Heart right ventricle (tissue), 16 donors: ENCODE measurements at regions of chr2 and their contacts with region 1.

Region 1: GRCh38 chr2:16756831-16757644 is 91.4 kb upstream of the CYRIA start:
- DNase-seq: peak; percentile 80 to 81
- ATAC-seq: peak; percentile 78 to 94 (median 92)
- H3K4me3 ChIP-seq: no peak overlapping the region
- H3K27ac ChIP-seq: peak overlapping the region in 5 of 10 donors; percentile 39 to 61 (median 57)
- H3K4me1 ChIP-seq: peaks cover 0 to 28% (median 10%) of the 10 kb centered on the region in 9 donors
- H3K27me3 ChIP-seq: peaks cover 0 to 5% (median 0%) of the 10 kb centered on the region in 7 donors
- CTCF ChIP-seq: peak; percentile 89 to 96 (median 93)

Region 2: DNA sequence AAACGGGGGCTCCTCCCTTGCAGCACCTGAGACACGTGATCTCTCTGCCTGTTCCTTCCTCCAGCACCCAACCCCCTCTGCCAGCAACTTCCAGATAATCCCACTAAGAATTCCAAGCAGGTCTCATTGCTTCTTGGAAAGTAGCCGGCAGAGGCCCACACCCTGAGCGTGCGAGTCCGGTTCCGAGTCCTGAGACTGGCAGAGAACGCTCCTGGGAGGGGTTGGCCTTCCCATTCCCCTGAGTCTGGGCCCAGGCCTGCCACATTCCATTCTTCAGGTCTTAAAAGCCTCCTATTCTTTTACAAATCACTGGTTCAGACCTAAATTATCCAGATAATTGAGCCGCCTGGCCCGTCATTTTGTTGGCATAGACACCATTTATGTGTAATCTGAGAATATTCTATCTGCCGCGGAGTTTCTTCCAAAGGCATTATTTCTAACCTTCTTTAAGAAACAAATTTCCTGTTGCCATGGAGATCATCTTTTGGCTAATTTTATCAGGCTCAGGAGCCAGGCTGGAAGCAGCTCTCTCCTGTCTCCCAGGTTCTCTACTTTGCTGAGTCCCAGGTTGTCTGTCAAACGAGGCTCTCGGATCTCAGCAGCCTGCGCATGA is 651.3 kb before region 1 on chr2:
- intact Hi-C with region 1: no loop called
- DNase-seq: no peak
- ATAC-seq: no peak
- H3K4me3 ChIP-seq: no peak overlapping the region
- H3K27ac ChIP-seq: no peak overlapping the region
- H3K4me1 ChIP-seq: peaks cover 0 to 4% (median 0%) of the 10 kb centered on the region in 9 donors
- H3K27me3 ChIP-seq: peaks cover 0 to 73% (median 50%) of the 10 kb centered on the region in 7 donors
- CTCF ChIP-seq: no peak

Region 3: GRCh38 chr2:16546128-16546754 is 210.8 kb before region 1 on chr2:
- intact Hi-C with region 1: loop called in 5 of 10 experiments (anchors 5 to 10 kb)
- DNase-seq: peak in 1 of 2 donors; percentile 24
- ATAC-seq: peak in 2 of 8 donors; percentile 16 to 66
- H3K4me3 ChIP-seq: no peak overlapping the region
- H3K27ac ChIP-seq: no peak overlapping the region
- H3K4me1 ChIP-seq: no peaks in the 10 kb centered on the region
- H3K27me3 ChIP-seq: peaks cover 0 to 4% (median 0%) of the 10 kb centered on the region in 7 donors
- CTCF ChIP-seq: no peak

Region 4: GRCh38 chr2:16553226-16553625 is 203.8 kb before region 1 on chr2:
- intact Hi-C with region 1: loop called in 7 of 10 experiments (anchors 1 to 10 kb)
- DNase-seq: peak in 1 of 2 donors; percentile 16
- ATAC-seq: peak in 2 of 8 donors; percentile 12 to 22
- H3K4me3 ChIP-seq: no peak overlapping the region
- H3K27ac ChIP-seq: no peak overlapping the region
- H3K4me1 ChIP-seq: no peaks in the 10 kb centered on the region
- H3K27me3 ChIP-seq: no peaks in the 10 kb centered on the region
- CTCF ChIP-seq: peak; percentile 23 to 68 (median 61)

Region 5: DNA sequence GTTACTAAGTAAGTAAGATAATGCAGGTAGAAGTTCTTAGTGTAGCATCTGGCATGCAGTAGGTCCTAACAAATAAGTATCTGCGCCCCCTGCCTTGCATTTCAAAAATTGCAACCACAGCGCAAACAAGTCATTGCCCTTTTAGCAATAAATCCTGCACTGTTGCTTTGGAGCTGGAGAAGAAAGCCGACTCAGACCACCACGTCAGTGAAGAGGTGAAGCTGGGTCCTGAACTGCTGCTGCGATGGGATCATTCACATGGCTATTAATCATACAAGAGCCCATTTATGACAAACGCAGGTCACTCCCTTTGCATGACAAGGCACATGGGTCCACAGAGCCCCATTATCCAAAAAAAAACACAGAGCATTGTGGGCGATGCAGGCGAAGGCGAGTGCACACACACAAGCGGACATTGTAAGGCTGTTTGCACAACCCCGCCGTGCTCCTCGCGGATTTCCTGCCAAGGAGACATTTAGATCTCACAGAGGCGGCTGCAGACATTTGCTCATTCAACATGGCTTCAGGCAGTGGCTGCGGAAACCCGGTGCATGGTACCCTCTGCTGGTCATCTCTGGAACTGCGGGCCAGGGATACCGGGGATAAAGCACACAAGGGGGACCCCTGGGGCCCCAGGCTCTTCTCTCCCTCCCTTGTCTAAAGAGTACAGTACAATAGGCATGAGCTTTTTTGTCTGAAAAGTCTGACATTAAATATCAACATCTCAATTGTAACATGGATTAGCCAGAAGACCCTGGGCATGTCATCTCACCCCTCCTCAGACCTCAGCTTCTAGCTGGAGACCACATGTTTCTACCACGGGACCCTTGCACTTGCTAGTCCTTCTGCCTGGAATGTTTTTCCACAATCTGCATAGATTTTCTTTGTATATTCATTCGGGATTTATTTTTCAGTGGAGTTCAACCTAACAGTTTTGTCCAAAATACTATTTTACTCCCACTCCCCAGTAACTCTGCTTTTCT is 148.1 kb before region 1 on chr2:
- intact Hi-C with region 1: loop called in 9 of 10 experiments (anchors 1 to 2 kb)
- DNase-seq: peak; percentile 86 to 88
- ATAC-seq: peak; percentile 83 to 92 (median 88)
- H3K4me3 ChIP-seq: peak overlapping the region in 9 of 10 donors; percentile 27 to 58 (median 48)
- H3K27ac ChIP-seq: peak overlapping the region in 5 of 10 donors; percentile 7 to 46 (median 33)
- H3K4me1 ChIP-seq: peaks cover 0 to 32% (median 17%) of the 10 kb centered on the region in 9 donors
- H3K27me3 ChIP-seq: no peaks in the 10 kb centered on the region
- CTCF ChIP-seq: peak; percentile 81 to 96 (median 92)

Region 6: DNA sequence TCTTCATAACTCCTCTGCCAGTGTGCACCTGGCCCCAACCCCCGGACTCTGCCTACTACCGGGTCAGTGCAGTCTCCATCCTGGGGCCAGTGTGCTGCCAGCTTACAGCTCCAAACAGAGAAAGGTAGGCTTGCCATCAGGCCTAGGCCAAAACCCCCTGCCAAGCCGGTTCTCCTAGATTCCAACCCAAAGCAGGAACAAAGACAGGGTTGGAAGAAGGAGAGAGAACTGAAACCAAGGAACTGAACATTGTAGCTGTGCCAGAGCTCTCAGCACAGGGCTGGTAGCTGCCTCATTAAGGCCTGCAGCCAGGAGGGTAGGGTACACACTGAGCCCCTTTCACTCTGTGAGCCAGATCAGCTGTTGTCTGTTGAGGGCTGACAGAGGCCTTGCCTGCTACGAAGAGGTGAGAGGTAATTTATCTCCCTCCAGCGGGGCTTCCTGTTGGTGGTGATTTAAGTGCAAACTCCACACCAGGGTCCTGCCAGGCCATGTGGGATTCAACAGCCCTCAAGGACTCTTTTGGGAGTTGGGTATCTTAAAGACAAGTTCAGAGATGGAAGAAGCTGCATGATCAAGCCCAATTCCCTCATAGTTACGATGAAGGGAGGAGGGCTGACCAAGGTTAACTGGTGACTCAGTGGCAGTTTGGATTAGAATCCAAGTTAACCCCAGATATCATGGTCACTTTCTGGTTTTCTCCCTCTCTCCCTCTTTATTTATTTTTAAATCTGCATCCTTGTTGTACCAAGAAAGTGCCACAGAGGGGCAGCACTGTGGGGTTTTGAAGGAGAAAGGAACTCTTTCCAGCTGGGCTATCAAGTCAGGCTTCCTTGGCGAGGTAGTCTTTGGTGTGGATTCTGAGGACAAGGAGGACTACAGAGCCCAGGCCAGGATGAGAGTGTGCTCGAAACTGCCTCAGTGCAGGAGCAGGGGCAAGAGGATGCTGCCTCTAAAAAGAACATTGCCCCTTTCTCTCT is 139.5 kb before region 1 on chr2:
- intact Hi-C with region 1: loop called (anchors 1 to 5 kb)
- DNase-seq: no peak
- ATAC-seq: peak in 5 of 8 donors; percentile 16 to 36 (median 21)
- H3K4me3 ChIP-seq: no peak overlapping the region
- H3K27ac ChIP-seq: peak overlapping the region in 4 of 10 donors; percentile 18 to 71 (median 39)
- H3K4me1 ChIP-seq: peaks cover 0 to 72% (median 35%) of the 10 kb centered on the region in 9 donors
- H3K27me3 ChIP-seq: no peaks in the 10 kb centered on the region
- CTCF ChIP-seq: peak in 8 of 9 donors; percentile 8 to 60 (median 52)

Region 7: GRCh38 chr2:16665748-16666448 is 91.1 kb before region 1 on chr2 and contains the start of gene CYRIA:
- intact Hi-C with region 1: loop called in 1 of 10 experiments (anchors 5 kb)
- DNase-seq: peak; percentile 63 to 77
- ATAC-seq: peak; percentile 69 to 86 (median 80)
- H3K4me3 ChIP-seq: peak within 1 kb of the TSS; percentile 44 to 77 (median 70)
- H3K27ac ChIP-seq: peak within 1 kb of the TSS; percentile 40 to 91 (median 73)
- H3K4me1 ChIP-seq: peaks cover 2 to 53% (median 38%) of the 10 kb centered on the region in 9 donors
- H3K27me3 ChIP-seq: peaks cover 0 to 6% (median 0%) of the 10 kb centered on the region in 7 donors
- CTCF ChIP-seq: no peak
- total RNA-seq, gene CYRIA: 1.5 to 10.6 (median 3.6) TPM